Activated CD4-positive, alpha-beta memory T cell treated with anti-CD3 and anti-CD28 coated beads for 36 hours (primary cell): ENCODE measurements at regions of chr17 and their contacts with region 1.

Region 1: DNA sequence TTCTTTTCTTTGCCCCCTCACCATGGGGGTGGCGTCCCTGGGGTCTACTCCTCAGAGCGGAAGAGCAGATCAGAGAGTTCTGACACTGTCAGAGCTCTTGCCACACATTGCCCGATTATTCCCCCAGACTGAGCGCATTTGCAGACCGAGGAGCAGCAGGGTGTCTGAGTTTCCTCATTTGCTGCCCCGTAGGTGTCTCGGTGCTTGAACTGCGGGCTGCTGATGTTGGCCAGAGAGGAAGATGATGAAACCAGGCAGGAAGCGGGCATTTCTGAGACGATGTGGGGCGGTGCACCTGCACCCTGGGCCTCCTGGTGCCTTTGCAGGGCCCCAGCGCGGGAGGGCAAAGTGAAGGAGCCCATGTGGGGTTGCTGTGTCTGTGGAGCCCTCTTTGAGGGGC is 55.2 kb downstream of the ARSG start:
- DNase-seq: peak; percentile 89
- H3K4me3 Mint-ChIP-seq: peak overlapping the region; percentile 74
- H3K27ac Mint-ChIP-seq: peak overlapping the region; percentile 93
- H3K4me1 Mint-ChIP-seq: peaks cover 67% of the 10 kb centered on the region
- H3K27me3 Mint-ChIP-seq: no peaks in the 10 kb centered on the region

Region 2: DNA sequence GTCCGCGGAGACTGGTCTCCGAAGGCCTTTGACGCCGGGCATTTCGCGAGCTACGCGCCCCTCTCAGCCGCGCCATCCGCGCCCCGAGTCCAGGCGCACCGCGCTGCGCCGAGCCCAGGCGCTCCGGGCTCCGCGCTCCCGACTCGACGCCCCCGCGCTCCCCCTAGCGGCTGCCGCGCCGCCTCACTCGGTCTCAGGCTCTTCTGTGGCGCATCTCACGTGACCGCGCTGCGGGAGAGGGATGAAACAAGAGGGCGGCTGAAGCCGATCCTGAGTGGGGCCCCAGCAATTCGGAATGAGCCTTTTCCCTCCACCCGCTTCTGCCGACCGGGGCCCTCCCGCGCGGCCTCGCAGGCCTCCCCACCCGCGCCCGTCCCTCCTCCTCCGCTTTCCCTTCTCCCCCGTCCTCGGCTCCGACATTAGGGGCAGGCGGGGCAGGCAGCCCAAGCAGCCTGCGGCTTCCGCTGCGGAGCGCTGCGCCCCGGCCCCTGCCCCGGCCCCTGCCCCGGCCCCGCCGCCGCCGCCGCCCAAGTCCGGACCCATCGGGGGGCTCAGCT is 141.1 kb before region 1 on chr17:
- CTCF ChIA-PET with region 1: interaction called, 3 read pairs
- POLR2A ChIA-PET with region 1: no interaction called
- intact Hi-C with region 1: loop called (anchors 2 kb)
- DNase-seq: peak; percentile 93
- H3K4me3 Mint-ChIP-seq: peak overlapping the region; percentile 81
- H3K27ac Mint-ChIP-seq: peak overlapping the region; percentile 89
- H3K4me1 Mint-ChIP-seq: peaks cover 32% of the 10 kb centered on the region
- H3K27me3 Mint-ChIP-seq: no peaks in the 10 kb centered on the region

Region 3: GRCh38 chr17:68291844-68292695 is 54.4 kb before region 1 on chr17:
- CTCF ChIA-PET with region 1: interaction called, 5 read pairs
- POLR2A ChIA-PET with region 1: interaction called, 10 read pairs
- intact Hi-C with region 1: loop called (anchors 5 kb)
- DNase-seq: peak; percentile 91
- H3K4me3 Mint-ChIP-seq: peak overlapping the region; percentile 82
- H3K27ac Mint-ChIP-seq: peak overlapping the region; percentile 88
- H3K4me1 Mint-ChIP-seq: peaks cover 63% of the 10 kb centered on the region
- H3K27me3 Mint-ChIP-seq: no peaks in the 10 kb centered on the region

Region 4: DNA sequence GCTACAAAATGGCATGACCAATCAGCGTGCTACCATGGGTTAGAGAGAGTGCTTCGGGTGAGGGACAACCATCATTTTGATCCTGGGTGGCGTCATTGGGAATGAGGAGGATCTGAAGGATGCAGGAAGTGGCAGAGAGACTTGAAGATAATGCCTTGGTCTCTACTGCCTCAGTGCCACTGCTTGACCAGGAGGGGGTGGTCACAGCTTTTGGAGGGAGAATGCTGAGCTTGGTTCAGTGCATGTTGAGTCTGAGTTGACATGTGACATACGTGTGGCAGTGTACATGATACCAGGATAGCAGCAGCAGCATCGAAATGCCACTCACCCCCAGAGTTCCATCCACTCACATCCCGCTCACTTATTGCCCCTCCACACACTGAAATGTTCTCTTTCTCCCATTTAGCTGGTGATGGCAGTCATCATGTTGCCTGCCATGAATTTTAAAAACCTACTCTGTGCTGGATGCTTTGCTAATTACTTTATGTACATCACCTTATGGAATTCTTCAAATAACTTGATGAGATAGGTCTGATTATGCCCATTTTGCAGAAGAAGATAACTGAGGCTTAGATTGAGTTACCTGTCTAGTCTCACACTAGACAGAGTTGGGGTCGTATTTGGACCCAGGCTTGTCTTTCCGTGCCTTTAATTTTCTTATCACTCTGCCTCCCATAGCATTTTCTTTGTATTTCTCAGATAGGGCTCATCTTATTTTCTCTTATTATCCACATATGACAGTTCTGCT is 18.5 kb before region 1 on chr17:
- CTCF ChIA-PET with region 1: interaction called, 3 read pairs
- POLR2A ChIA-PET with region 1: no interaction called
- intact Hi-C with region 1: loop called (anchors 2 kb)
- DNase-seq: no peak
- H3K4me3 Mint-ChIP-seq: no peak overlapping the region
- H3K27ac Mint-ChIP-seq: no peak overlapping the region
- H3K4me1 Mint-ChIP-seq: peaks cover 18% of the 10 kb centered on the region
- H3K27me3 Mint-ChIP-seq: no peaks in the 10 kb centered on the region

Region 5: DNA sequence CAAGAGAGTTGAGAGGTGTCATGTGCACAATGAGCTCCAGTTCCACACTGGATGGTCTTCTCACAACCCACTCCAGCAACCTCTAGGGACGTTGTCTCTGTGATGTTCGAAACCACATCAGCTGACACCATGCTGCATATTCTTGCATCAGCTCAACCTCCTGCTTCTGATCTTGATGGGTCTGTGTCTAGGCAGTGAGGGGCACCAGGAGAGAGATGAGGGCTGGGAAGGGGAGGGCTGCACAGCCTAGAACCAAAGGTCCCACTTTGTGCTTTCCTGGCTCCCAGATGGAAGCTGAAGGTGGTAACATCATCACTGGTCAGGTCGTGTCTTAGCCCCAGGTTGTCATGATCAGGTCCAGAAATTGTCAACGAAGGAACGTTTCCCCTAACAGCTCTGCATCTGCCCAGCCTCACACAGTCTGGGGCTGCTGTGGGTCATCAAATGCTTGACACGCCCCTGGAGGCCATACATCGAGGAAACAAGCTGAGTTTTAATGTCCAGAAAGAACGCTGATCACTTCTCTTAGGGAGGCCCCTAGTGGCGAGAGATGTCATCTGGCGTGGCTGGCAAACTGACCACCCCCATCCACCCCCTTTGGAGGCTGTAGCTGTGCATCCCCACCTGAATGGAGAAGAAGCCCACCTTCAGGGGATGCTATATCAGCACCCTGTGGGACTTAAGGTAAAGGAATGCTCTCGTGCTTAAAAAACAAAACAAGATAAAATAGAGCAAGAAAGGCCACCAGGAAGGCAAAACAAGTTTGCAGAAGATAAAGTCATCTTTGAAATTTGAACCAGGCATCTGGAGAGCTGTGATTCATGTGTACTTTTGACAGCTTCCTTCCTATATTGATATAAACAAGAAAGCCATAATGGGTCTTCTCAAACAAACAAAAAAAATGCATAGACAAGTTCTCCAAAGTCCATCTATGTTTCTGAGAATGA is 52.5 kb after region 1 on chr17:
- CTCF ChIA-PET with region 1: interaction called, 15 read pairs
- POLR2A ChIA-PET with region 1: interaction called, 4 read pairs
- intact Hi-C with region 1: loop called (anchors 2 kb)
- DNase-seq: peak; percentile 55
- H3K4me3 Mint-ChIP-seq: peak overlapping the region; percentile 45
- H3K27ac Mint-ChIP-seq: peak overlapping the region; percentile 87
- H3K4me1 Mint-ChIP-seq: peaks cover 37% of the 10 kb centered on the region
- H3K27me3 Mint-ChIP-seq: no peaks in the 10 kb centered on the region